ENCODE measurements at regions of chr20 and their contacts with region 1.

Region 1: GRCh38 chr20:23937303-23938117 is 51.1 kb downstream of the GGTLC1 start:
- DNase-seq: no peak
- ATAC-seq: peak; percentile 31
- H3K4me3 Mint-ChIP-seq: no peak overlapping the region
- H3K27ac Mint-ChIP-seq: no peak overlapping the region
- H3K4me1 Mint-ChIP-seq: no peaks in the 10 kb centered on the region
- H3K27me3 Mint-ChIP-seq: peaks cover 2% of the 10 kb centered on the region
- CTCF ChIP-seq: no peak

Region 2: GRCh38 chr20:23637282-23638221 is 300.0 kb before region 1 on chr20 and contains the start of gene CST3:
- CTCF ChIA-PET with region 1: no interaction called
- POLR2A ChIA-PET with region 1: no interaction called
- intact Hi-C with region 1: no loop called
- DNase-seq: no peak
- ATAC-seq: no peak
- H3K4me3 Mint-ChIP-seq: no peak within 1 kb of the TSS
- H3K27ac Mint-ChIP-seq: no peak within 1 kb of the TSS
- H3K4me1 Mint-ChIP-seq: peaks cover 8% of the 10 kb centered on the region
- H3K27me3 Mint-ChIP-seq: peaks cover 22% of the 10 kb centered on the region
- CTCF ChIP-seq: no peak
- total RNA-seq, gene CST3: not detected in 2 replicates

Region 3: DNA sequence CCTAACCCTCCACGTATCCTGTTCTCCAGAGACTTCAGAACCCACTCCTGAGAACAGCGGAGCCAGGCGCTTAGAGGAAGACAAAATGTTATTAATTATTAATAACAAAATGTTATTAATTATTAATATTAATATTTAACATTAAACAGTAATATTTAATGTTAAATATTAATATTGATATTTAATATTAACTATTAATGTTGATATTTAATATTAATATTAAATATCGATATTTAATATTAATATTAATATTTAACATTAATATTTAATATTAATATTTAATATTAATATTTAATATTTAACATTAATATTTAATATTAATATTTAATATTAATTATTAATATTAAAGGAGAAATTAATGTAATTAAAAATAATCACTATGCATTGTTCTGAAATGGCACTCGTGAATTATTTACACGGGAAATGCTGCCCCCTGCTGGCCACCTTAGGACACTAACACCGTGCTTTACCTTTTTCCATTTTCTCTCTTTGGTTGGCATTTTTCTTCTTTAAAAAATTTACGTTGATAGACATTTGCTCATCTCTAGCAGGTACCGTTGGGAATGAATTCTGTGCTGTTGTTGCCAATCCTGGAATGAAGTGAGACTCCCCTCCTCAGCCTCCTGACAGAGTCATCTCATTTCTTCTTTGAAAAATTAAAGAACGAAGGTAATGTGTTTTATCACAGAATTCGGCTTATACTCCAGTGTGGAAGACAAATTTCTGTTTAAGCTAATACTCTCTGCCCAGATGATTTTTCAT is 58.6 kb after region 1 on chr20:
- CTCF ChIA-PET with region 1: interaction called, 8 read pairs
- POLR2A ChIA-PET with region 1: no interaction called
- intact Hi-C with region 1: loop called (anchors 1 kb)
- DNase-seq: peak; percentile 27
- ATAC-seq: no peak
- H3K4me3 Mint-ChIP-seq: no peak overlapping the region
- H3K27ac Mint-ChIP-seq: no peak overlapping the region
- H3K4me1 Mint-ChIP-seq: no peaks in the 10 kb centered on the region
- H3K27me3 Mint-ChIP-seq: peaks cover 2% of the 10 kb centered on the region
- CTCF ChIP-seq: peak; percentile 52

Region 4: GRCh38 chr20:24100385-24101011 is 163.0 kb after region 1 on chr20:
- CTCF ChIA-PET with region 1: no interaction called
- POLR2A ChIA-PET with region 1: no interaction called
- intact Hi-C with region 1: loop called (anchors 1 kb)
- DNase-seq: no peak
- ATAC-seq: no peak
- H3K4me3 Mint-ChIP-seq: no peak overlapping the region
- H3K27ac Mint-ChIP-seq: no peak overlapping the region
- H3K4me1 Mint-ChIP-seq: no peaks in the 10 kb centered on the region
- H3K27me3 Mint-ChIP-seq: peaks cover 14% of the 10 kb centered on the region
- CTCF ChIP-seq: no peak

Region 5: DNA sequence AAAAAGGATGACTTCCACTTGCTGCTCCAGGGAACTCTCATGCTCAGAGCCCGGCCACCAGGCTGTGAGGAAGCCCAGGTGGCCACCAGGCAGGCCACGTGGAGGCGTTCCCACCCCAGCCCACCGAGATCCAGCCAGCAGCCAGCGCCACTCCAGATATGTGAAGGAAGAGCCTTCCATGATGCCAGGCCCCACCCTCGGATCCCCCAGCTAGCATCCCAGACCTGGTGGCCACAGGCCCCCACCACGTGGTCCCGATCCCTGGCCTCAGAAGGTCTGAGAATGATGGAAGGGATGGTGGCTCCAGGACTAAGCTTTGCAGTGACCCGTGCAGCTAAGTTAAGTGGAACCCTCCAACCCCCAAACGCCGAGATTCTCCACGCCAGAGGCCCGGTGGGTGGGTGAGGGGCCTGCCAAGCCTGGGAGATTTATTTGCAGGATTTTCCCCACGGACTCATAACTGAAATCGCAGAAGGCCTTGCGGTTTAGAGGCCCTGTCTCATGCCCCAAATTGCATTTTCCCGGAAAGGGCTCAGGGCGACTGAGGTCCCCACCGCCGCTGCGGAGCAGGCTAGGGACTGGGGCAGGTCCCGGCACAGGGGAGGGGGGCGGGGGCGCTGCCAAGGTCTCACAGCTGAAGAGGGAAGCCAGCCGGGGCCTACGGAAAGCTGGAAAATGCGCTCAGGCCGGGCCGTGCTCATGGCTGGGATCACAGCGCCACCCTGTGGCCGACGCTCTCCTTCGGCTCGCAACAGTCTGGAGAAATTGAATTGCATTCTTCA is 980.5 kb after region 1 on chr20:
- CTCF ChIA-PET with region 1: interaction called, 4 read pairs
- POLR2A ChIA-PET with region 1: no interaction called
- intact Hi-C with region 1: loop called (anchors 5 kb)
- DNase-seq: no peak
- ATAC-seq: no peak
- H3K4me3 Mint-ChIP-seq: no peak overlapping the region
- H3K27ac Mint-ChIP-seq: no peak overlapping the region
- H3K4me1 Mint-ChIP-seq: peaks cover 3% of the 10 kb centered on the region
- H3K27me3 Mint-ChIP-seq: peaks cover 22% of the 10 kb centered on the region
- CTCF ChIP-seq: no peak